Activated T-helper 1 cell treated with anti-CD3 and anti-CD28 coated beads, Interleukin-12 subunit alpha, Interleukin-12 subunit beta, Interleukin-2, Interleukin-4 antibody, amounts not matched to agents 30 ng/mL and 10 ng/mL and 1 ng/mL, durations not matched to agents 14 hours and 24 hours and 36 hours (primary cell): ENCODE measurements at regions of chr19 and their contacts with region 1.

Region 1: DNA sequence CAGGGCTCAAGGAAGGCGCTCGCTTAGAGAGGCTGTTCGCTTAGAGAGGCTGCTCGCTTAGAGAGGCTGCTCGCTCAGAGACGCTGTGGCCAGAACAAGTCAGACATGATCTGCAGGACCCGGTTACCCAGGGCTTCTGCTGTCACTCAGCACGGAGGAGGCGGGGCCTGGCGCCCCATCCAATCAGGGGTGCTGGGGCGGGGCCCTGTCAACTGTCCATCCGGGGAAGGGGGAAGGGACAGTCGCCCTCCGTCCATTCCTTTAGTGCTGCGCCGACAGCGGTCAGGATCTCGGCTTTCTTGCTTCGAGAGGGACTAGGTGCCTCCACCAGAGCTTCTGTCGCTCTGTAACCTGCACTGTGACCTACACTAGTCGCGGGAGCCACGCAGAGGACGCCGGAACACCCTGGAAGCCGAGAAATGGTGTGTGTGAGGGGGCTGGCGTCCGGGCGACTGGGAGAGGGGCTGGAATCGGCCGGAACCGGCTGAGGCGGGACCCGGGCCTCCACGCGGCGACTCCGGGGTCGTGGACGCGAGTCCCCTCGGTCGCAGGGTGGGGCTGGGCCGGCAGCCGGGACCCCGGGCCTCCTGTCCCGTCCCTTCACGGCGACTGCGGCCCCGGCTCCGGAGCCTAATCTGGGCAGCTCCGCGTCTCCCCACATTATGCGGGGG is at the start of gene ZNF440:
- DNase-seq: peak; percentile 84
- H3K4me3 Mint-ChIP-seq: peak within 1 kb of the TSS; percentile 88
- H3K27ac Mint-ChIP-seq: peak within 1 kb of the TSS; percentile 69
- H3K4me1 Mint-ChIP-seq: peaks cover 13% of the 10 kb centered on the region
- H3K27me3 Mint-ChIP-seq: peaks cover 1% of the 10 kb centered on the region
- total RNA-seq, gene ZNF440: 6.7 and 9.2 TPM in 2 replicates

Region 2: GRCh38 chr19:11685676-11686650 is 128.2 kb before region 1 on chr19:
- intact Hi-C with region 1: no loop called
- DNase-seq: no peak
- H3K4me3 Mint-ChIP-seq: no peak overlapping the region
- H3K27ac Mint-ChIP-seq: no peak overlapping the region
- H3K4me1 Mint-ChIP-seq: peaks cover 5% of the 10 kb centered on the region
- H3K27me3 Mint-ChIP-seq: no peaks in the 10 kb centered on the region

Region 3: DNA sequence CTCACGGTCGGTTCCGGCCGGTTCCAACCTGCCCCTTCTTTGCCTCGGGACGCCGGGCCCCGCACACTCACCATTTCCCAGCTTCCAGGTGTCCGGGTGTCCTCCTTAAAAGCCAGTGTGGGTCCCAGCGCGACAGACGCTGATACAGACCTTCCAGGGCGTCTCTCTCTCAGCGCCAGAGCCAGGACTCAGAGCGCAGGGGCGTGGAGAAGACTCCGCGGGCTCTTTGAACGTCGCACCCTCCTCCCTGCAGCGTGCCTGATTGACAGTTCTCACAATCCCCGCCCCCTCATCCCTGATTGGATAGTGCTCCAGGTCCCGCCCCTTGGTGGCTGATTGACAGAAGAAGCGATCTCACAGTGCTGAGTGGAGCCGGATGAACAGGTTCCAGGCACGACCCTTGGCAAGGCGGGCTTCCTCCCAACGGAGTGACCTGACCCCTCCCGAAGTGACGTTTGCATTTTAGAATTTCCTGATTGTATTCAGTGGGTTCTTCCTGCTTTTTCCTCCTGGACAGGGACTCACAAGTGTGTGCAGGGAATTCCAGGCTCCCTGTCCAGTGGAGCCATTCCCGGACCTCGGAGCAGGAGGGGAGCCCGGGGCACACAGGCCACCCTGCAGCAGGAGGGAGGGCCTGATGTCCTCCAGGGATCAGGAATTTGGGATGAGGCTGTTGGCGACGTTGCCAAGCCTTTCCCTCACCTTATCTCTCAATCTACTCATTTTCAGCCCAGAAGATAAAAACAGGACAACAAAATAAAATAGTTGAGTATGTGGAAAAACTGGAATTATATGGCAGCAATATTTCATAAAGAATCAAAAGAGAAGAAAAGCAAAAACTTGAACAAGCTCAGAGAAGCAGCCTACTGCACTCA is 75.2 kb before region 1 on chr19 and contains the start of gene ZNF823:
- intact Hi-C with region 1: loop called (anchors 1 kb)
- DNase-seq: peak; percentile 91
- H3K4me3 Mint-ChIP-seq: peak within 1 kb of the TSS; percentile 98
- H3K27ac Mint-ChIP-seq: peak within 1 kb of the TSS; percentile 92
- H3K4me1 Mint-ChIP-seq: peaks cover 19% of the 10 kb centered on the region
- H3K27me3 Mint-ChIP-seq: peaks cover 3% of the 10 kb centered on the region
- total RNA-seq, gene ZNF823: 2.5 and 2.8 TPM in 2 replicates

Region 4: GRCh38 chr19:11766597-11767591 is 47.3 kb before region 1 on chr19 and contains the start of gene ZNF441:
- intact Hi-C with region 1: loop called (anchors 1 kb)
- DNase-seq: peak; percentile 87
- H3K4me3 Mint-ChIP-seq: peak within 1 kb of the TSS; percentile 95
- H3K27ac Mint-ChIP-seq: peak within 1 kb of the TSS; percentile 95
- H3K4me1 Mint-ChIP-seq: peaks cover 11% of the 10 kb centered on the region
- H3K27me3 Mint-ChIP-seq: no peaks in the 10 kb centered on the region
- total RNA-seq, gene ZNF441: 2.8 and 4.4 TPM in 2 replicates

Region 5: DNA sequence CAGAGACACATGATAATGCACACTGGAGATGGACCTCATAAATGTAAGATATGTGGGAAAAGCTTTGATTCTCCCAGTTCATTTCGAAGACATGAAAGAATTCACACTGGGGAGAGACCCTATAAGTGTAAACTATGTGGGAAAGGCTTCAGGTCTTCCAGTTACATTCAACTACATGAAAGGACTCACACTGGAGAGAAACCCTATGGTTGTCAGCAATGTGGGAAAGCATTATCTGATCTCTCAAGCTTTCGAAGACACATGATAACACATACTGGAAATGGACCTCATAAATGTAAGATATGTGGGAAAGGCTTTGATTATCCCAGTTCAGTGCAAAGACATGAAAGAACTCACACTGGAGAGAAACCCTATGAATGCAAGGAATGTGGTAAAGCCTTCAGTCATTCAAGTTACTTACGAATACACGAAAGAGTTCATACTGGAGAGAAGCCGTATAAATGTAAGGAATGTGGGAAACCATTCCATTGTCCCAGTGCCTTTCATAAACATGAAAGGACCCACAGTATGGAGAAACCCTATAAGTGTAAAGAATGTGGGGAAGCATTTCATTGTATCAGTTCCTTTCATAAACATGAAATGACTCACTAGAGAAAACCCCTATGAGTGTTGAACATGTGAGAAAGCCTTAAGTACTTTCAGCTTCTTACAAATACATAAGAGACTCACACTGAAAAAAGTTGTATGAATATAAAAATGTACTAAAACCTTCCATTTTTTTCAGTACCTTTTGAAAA is 32.7 kb before region 1 on chr19:
- intact Hi-C with region 1: no loop called
- DNase-seq: no peak
- H3K4me3 Mint-ChIP-seq: no peak overlapping the region
- H3K27ac Mint-ChIP-seq: no peak overlapping the region
- H3K4me1 Mint-ChIP-seq: no peaks in the 10 kb centered on the region
- H3K27me3 Mint-ChIP-seq: no peaks in the 10 kb centered on the region

Region 6: DNA sequence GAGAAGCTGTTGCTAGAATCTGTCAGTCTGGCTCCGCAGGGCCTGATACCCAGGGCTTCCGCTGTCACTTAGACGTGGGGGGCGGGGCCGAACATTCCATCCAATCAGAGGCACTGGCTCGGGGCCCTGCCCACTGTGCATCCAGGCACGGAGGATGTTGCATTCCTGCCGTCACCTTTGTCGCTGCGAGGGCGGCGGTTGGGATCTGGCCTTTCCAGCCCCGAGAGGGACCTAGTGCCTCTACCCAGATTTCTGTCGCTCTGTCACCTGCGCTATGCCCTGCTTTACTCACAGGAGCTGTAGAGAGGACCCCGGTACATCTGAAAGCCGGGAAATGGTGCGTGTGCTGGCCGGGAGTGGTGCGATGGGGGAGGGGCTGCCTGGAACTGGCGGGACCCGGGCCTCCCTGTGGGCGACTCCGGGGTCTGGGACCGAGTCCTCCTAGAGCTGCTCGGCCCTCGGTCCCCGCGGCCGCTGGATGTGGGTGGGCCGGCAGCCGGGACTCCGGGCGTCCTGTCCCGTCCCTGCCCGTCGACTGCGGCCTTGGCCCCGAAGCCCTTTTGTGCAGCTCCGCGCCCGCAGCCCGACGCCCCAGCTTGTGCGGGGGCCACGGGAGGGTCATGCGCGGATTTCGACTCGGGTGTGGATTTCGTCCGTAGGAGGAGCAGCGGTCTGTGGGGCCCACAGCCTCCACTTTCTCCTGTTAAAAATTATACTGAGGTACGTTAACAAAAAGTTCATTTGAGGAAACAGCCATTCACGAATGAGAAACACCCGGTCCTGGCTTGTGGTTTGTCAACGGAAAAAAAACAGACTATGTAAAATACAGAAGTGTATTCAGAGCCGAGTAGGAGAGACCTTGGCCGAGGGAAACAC is 34.7 kb after region 1 on chr19 and contains the start of gene ZNF439:
- intact Hi-C with region 1: loop called (anchors 1 kb)
- DNase-seq: peak; percentile 76
- H3K4me3 Mint-ChIP-seq: peak within 1 kb of the TSS; percentile 75
- H3K27ac Mint-ChIP-seq: peak within 1 kb of the TSS; percentile 73
- H3K4me1 Mint-ChIP-seq: peaks cover 15% of the 10 kb centered on the region
- H3K27me3 Mint-ChIP-seq: no peaks in the 10 kb centered on the region
- total RNA-seq, gene ZNF439: 3.3 and 3.6 TPM in 2 replicates

Region 7: DNA sequence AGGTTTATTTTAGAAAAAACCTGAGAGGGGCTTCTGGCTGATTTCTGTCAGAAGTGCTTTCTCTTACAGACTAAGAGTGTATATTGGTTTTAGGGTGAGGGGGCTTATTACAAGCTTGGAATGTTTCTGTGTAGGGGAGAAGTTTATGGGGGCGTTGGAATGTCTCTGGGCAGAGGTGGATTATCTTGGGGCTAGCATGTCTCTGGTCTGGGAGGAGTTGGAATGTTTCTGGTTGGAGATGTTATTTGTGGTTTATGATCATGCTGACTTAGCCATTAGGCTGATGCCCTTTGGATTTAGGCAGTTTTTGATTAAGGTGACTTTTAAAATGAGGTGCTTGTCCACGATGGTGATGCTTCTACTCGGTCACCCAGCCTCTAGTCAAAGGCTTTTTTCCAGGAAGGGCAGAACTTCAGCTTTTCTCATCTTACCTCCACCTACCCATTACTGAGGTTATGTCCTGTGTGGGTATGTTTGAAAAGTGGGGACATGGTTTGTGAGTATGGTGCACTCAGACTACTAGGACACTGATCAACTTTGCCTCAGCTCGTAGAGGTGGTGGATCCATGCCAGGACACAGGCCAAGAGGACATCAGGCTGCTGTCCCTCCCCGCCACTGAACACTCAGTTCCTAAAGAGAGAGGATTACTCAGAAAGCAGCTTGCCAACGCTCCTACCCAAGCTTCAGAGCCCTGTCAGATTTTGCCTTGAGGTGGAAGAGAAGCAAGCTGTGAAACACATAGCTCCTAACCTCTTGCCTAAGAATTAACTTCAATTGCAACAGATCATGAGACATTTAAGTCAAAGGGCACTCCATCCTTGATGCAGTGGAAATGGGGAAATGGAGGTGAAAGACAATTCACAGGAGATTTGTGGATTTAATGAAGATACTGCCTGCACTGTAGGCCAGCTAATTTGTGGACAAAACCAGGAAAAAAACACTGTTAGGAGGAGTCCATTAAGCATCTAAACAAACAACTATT is 416.9 kb after region 1 on chr19:
- intact Hi-C with region 1: no loop called
- DNase-seq: no peak
- H3K4me3 Mint-ChIP-seq: no peak overlapping the region
- H3K27ac Mint-ChIP-seq: no peak overlapping the region
- H3K4me1 Mint-ChIP-seq: no peaks in the 10 kb centered on the region
- H3K27me3 Mint-ChIP-seq: no peaks in the 10 kb centered on the region

Region 8: DNA sequence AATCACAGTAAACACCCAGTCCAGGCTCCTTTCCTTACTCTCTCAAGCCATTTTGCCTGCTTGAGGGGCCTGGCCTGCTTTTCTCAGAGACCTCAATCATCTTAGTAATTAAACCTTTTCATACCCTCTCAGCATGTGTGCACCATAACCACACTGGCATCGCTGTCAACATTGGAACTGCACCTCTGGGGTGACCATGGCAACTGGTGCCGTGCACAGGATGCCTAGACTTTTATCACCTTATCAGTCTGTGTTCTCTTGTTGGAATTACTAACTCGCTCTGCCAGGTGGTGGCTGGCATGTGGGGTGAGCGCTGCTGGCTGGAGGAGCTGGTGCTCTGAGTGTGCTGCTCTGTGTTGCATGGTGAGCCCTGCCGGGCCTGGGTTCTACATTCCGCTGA is 688.0 kb after region 1 on chr19:
- intact Hi-C with region 1: no loop called
- DNase-seq: no peak
- H3K4me3 Mint-ChIP-seq: no peak overlapping the region
- H3K27ac Mint-ChIP-seq: no peak overlapping the region
- H3K4me1 Mint-ChIP-seq: no peaks in the 10 kb centered on the region
- H3K27me3 Mint-ChIP-seq: no peaks in the 10 kb centered on the region